B cell (primary cell): ENCODE measurements at regions of chr3 and their contacts with region 1.

Region 1: GRCh38 chr3:116863822-116864589 is 154.4 kb downstream of the TUSC7 start:
- DNase-seq: peak; percentile 58
- ATAC-seq: no peak
- H3K4me3 ChIP-seq: peak overlapping the region in 3 of 5 experiments; percentile 18 to 43 (median 32)
- H3K4me3 Mint-ChIP-seq: no peak overlapping the region
- H3K27ac ChIP-seq: no peak overlapping the region
- H3K27ac Mint-ChIP-seq: no peak overlapping the region
- H3K4me1 ChIP-seq: peaks cover 5 to 10% of the 10 kb centered on the region in 2 donors
- H3K4me1 Mint-ChIP-seq: no peaks in the 10 kb centered on the region
- H3K27me3 ChIP-seq: no peaks in the 10 kb centered on the region
- H3K27me3 Mint-ChIP-seq: no peaks in the 10 kb centered on the region
- CTCF ChIP-seq: peak; percentile 65

Region 2: GRCh38 chr3:116618138-116618537 is 245.9 kb before region 1 on chr3:
- CTCF ChIA-PET with region 1: no interaction called
- POLR2A ChIA-PET with region 1: no interaction called
- intact Hi-C with region 1: no loop called
- DNase-seq: no peak
- ATAC-seq: no peak
- H3K4me3 ChIP-seq: no peak overlapping the region
- H3K4me3 Mint-ChIP-seq: no peak overlapping the region
- H3K27ac ChIP-seq: no peak overlapping the region
- H3K27ac Mint-ChIP-seq: no peak overlapping the region
- H3K4me1 ChIP-seq: no peaks in the 10 kb centered on the region
- H3K4me1 Mint-ChIP-seq: no peaks in the 10 kb centered on the region
- H3K27me3 ChIP-seq: no peaks in the 10 kb centered on the region
- H3K27me3 Mint-ChIP-seq: no peaks in the 10 kb centered on the region
- CTCF ChIP-seq: no peak

Region 3: DNA sequence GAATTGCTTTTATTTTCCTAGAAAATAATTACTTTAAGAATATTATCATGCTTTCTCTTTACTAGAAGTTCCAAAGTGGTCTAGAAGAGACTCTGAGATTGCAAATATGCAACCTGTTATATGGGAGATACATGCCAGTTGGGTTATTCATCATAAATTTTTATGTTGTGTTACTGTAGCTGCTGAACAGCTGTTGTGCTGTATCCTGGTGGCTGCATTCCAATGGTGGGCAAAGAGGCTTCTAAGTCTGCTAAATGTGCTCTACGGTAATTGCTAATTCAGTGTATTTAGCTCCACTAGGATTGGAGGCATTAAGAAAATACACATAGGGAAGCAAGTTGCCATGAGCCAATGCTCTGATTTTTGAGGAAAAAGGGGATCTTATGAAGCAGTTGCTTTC is 254.6 kb after region 1 on chr3:
- CTCF ChIA-PET with region 1: no interaction called
- POLR2A ChIA-PET with region 1: no interaction called
- intact Hi-C with region 1: no loop called
- DNase-seq: no peak
- ATAC-seq: no peak
- H3K4me3 ChIP-seq: no peak overlapping the region
- H3K4me3 Mint-ChIP-seq: no peak overlapping the region
- H3K27ac ChIP-seq: no peak overlapping the region
- H3K27ac Mint-ChIP-seq: no peak overlapping the region
- H3K4me1 ChIP-seq: no peaks in the 10 kb centered on the region
- H3K4me1 Mint-ChIP-seq: no peaks in the 10 kb centered on the region
- H3K27me3 ChIP-seq: no peaks in the 10 kb centered on the region
- H3K27me3 Mint-ChIP-seq: no peaks in the 10 kb centered on the region
- CTCF ChIP-seq: no peak

Region 4: DNA sequence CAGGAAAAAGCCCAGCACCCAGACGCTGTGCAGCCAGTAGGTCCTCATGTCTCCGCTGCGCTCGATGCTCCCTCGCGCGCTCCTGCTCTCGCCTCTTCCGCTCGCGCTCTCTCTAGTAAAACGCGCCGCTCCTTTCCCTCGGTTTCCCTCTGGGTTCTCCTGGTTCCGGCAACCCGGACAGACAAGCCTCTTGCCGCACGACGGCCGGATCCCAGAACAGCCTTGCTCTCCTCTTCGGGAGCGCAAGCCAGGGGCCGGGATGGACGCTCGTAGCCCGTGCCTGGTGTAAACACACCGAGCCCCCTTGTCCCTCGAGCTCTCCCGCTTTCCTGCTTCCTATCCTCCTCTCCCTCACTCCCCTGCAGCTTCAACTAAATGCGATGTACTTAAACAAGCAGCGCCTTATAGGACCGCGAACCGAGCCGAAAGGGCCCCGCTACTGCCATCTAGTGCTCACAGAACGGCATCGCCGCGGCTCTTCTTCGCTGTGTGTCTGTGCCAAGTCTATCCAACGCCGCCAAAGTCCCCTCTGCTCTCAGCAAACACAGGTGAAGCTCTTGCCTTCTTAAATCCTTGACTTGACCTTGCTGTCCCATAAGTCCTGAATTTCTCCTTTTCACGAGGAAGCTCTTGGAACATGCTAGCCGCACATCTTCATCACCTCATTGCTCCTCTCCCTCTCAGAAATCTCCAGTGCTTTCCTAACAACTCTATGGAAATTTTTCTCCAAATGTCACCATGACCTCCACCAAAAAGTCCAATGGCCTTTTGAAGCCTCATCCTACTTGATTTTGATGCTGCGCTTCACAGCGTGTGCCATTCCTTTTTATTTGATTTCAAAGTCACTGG is 1133.4 kb after region 1 on chr3:
- CTCF ChIA-PET with region 1: interaction called, 4 read pairs
- POLR2A ChIA-PET with region 1: no interaction called
- intact Hi-C with region 1: loop called (anchors 5 kb)
- DNase-seq: peak; percentile 55
- ATAC-seq: peak; percentile 69
- H3K4me3 ChIP-seq: peak overlapping the region in 1 of 5 experiments; percentile 7
- H3K4me3 Mint-ChIP-seq: no peak overlapping the region
- H3K27ac ChIP-seq: no peak overlapping the region
- H3K27ac Mint-ChIP-seq: no peak overlapping the region
- H3K4me1 ChIP-seq: peaks cover 9 to 10% of the 10 kb centered on the region in 2 donors
- H3K4me1 Mint-ChIP-seq: no peaks in the 10 kb centered on the region
- H3K27me3 ChIP-seq: peaks cover 0 to 15% (median 3%) of the 10 kb centered on the region in 4 experiments
- H3K27me3 Mint-ChIP-seq: no peaks in the 10 kb centered on the region
- CTCF ChIP-seq: peak; percentile 70